ENCODE measurements at regions of chr14 and their contacts with region 1.

Region 1: GRCh38 chr14:51442513-51443175 is 202.6 kb downstream of the TMX1 start:
- DNase-seq: peak; percentile 94
- H3K4me3 ChIP-seq: peak overlapping the region in 1 of 3 experiments; percentile 1
- H3K27ac ChIP-seq: peak overlapping the region; percentile 89
- H3K4me1 ChIP-seq: peaks cover 41% of the 10 kb centered on the region
- H3K27me3 ChIP-seq: no peaks in the 10 kb centered on the region
- CTCF ChIP-seq: no peak

Region 2: GRCh38 chr14:51104467-51104866 is 338.2 kb before region 1 on chr14:
- CTCF ChIA-PET with region 1: no interaction called
- dilution Hi-C with region 1: no loop called
- in situ Hi-C with region 1: no loop called
- intact Hi-C with region 1: no loop called
- DNase-seq: no peak
- H3K4me3 ChIP-seq: no peak overlapping the region
- H3K27ac ChIP-seq: no peak overlapping the region
- H3K4me1 ChIP-seq: no peaks in the 10 kb centered on the region
- H3K27me3 ChIP-seq: no peaks in the 10 kb centered on the region
- CTCF ChIP-seq: no peak

Region 3: DNA sequence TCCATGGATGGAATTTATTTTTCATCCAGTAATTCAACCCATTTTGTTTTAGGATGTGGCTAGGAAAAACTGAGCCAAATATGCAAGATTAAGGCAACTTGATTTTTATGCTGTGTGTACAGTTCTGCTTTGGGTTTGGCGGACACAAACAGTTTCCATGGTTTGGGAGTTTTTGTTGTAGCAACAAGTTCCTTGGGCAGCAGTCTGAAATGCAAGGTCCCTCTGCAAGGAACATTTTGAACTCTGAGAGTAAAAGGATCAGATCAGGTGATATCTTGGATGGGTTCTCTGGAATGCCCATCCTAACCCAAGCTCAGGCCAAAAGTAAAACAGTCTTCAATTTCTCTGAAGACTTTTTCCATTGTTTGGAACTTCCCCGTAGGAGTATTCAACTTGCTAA is 41.4 kb before region 1 on chr14:
- CTCF ChIA-PET with region 1: no interaction called
- dilution Hi-C with region 1: loop called (anchors 5 kb)
- in situ Hi-C with region 1: no loop called
- intact Hi-C with region 1: loop called (anchors 1 kb)
- DNase-seq: no peak
- H3K4me3 ChIP-seq: no peak overlapping the region
- H3K27ac ChIP-seq: no peak overlapping the region
- H3K4me1 ChIP-seq: peaks cover 38% of the 10 kb centered on the region
- H3K27me3 ChIP-seq: no peaks in the 10 kb centered on the region
- CTCF ChIP-seq: no peak

Region 4: GRCh38 chr14:51458563-51458955 is 15.9 kb after region 1 on chr14:
- CTCF ChIA-PET with region 1: no interaction called
- dilution Hi-C with region 1: no loop called
- in situ Hi-C with region 1: no loop called
- intact Hi-C with region 1: loop called (anchors 2 kb)
- DNase-seq: peak; percentile 87
- H3K4me3 ChIP-seq: no peak overlapping the region
- H3K27ac ChIP-seq: no peak overlapping the region
- H3K4me1 ChIP-seq: peaks cover 43% of the 10 kb centered on the region
- H3K27me3 ChIP-seq: no peaks in the 10 kb centered on the region
- CTCF ChIP-seq: no peak

Region 5: DNA sequence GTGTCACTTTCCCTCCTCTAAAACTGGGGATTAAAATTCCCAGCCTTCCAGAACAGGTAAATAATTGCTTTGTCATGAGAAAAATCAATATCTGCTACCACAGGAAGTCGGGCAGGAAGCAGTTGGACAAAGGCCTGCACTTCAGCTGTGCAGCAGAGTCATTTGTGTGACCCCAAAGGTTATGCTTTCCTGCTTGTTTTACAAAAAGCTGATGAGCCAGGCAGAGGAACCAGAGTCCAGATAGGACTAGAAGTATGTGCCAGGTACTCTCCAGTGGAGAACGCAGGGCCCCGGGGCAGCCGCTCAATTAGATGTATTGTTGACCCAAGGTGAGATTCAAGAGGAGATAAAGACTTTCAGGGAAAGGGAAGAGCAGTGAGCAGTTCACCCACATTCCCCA is 92.0 kb after region 1 on chr14:
- CTCF ChIA-PET with region 1: no interaction called
- dilution Hi-C with region 1: no loop called
- in situ Hi-C with region 1: no loop called
- intact Hi-C with region 1: loop called (anchors 2 kb)
- DNase-seq: peak; percentile 89
- H3K4me3 ChIP-seq: no peak overlapping the region
- H3K27ac ChIP-seq: peak overlapping the region; percentile 96
- H3K4me1 ChIP-seq: peaks cover 42% of the 10 kb centered on the region
- H3K27me3 ChIP-seq: no peaks in the 10 kb centered on the region
- CTCF ChIP-seq: no peak